CD4-positive, alpha-beta T cell (primary cell): ENCODE measurements at regions of chr7 and their contacts with region 1.

Region 1: DNA sequence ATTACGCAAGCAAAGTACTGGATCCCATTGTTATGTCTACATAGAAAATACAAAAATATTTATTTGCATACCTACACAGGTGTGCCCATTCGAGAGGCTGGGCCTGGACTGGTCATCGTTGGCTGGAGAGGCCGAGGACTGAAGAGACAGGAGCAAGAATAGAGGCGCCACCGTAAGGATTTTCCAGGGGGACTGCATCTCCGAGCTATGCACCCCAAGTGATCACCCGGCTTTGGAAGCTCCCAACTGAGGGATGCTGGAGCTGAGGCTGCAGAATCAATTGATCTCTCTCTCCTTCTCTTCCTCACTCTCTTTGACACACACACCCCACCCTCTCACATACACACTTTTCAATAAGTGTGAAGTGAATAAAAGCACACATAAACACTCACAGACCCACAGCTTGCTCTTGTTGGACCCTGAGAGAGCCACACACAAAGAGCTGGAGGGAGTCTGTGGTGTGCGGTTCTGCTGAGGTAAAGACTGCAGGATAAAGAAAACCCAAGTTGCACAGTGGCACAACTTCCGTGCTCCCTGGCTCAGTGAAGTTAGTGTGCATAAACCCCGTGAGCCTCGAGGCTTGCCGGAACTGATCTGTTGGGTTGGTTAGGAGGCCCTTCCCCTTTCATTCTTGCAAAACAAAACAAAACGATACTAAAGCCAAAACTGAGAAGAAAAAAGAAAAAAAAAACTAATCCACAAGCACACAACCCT is at the start of gene AOAH:
- DNase-seq: peak; percentile 56 to 93 (median 74)
- ATAC-seq: peak; percentile 96
- H3K4me3 ChIP-seq: peak within 1 kb of the TSS; percentile 58
- H3K4me3 Mint-ChIP-seq: peak within 1 kb of the TSS; percentile 78
- H3K27ac ChIP-seq: peak within 1 kb of the TSS; percentile 44 to 51
- H3K27ac Mint-ChIP-seq: peak within 1 kb of the TSS; percentile 94
- H3K4me1 ChIP-seq: peaks cover 59% of the 10 kb centered on the region
- H3K4me1 Mint-ChIP-seq: peaks cover 95% of the 10 kb centered on the region
- H3K27me3 ChIP-seq: no peaks in the 10 kb centered on the region
- H3K27me3 Mint-ChIP-seq: no peaks in the 10 kb centered on the region
- CTCF ChIP-seq: no peak
- total RNA-seq, gene AOAH: 27.5 to 30.3 TPM

Region 2: GRCh38 chr7:36526863-36527548 is 197.1 kb before region 1 on chr7:
- CTCF ChIA-PET with region 1: no interaction called
- POLR2A ChIA-PET with region 1: no interaction called
- intact Hi-C with region 1: no loop called
- DNase-seq: no peak
- ATAC-seq: no peak
- H3K4me3 ChIP-seq: no peak overlapping the region
- H3K4me3 Mint-ChIP-seq: no peak overlapping the region
- H3K27ac ChIP-seq: no peak overlapping the region
- H3K27ac Mint-ChIP-seq: no peak overlapping the region
- H3K4me1 ChIP-seq: no peaks in the 10 kb centered on the region
- H3K4me1 Mint-ChIP-seq: no peaks in the 10 kb centered on the region
- H3K27me3 ChIP-seq: no peaks in the 10 kb centered on the region
- H3K27me3 Mint-ChIP-seq: no peaks in the 10 kb centered on the region
- CTCF ChIP-seq: no peak

Region 3: DNA sequence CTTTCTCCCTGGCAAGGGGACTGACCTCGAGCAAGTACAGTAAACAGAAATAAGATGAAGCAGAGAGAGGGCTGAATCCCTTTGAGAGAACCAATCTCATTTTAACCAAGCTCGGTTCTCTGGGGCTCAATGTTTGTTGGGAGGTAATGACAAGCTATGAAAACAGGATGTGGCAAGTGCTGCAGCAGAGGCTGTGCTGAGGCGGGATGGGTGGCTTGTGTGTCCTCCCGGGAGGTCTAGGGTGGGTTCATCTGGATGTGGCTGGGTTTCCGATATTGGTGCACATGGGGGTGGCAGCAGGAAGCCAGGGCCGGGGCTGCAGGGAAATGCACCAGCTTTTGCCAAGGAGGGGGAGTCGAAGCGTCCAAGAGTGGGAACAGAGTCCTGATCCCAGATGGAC is 84.3 kb before region 1 on chr7:
- CTCF ChIA-PET with region 1: no interaction called
- POLR2A ChIA-PET with region 1: interaction called, 16 read pairs
- intact Hi-C with region 1: no loop called
- DNase-seq: peak; percentile 12 to 89 (median 56)
- ATAC-seq: peak; percentile 92
- H3K4me3 ChIP-seq: no peak overlapping the region
- H3K4me3 Mint-ChIP-seq: peak overlapping the region; percentile 65
- H3K27ac ChIP-seq: peak overlapping the region; percentile 62 to 65
- H3K27ac Mint-ChIP-seq: peak overlapping the region; percentile 91
- H3K4me1 ChIP-seq: peaks cover 47% of the 10 kb centered on the region
- H3K4me1 Mint-ChIP-seq: peaks cover 97% of the 10 kb centered on the region
- H3K27me3 ChIP-seq: no peaks in the 10 kb centered on the region
- H3K27me3 Mint-ChIP-seq: no peaks in the 10 kb centered on the region
- CTCF ChIP-seq: no peak

Region 4: GRCh38 chr7:36686499-36686898 is 37.6 kb before region 1 on chr7:
- CTCF ChIA-PET with region 1: no interaction called
- POLR2A ChIA-PET with region 1: interaction called, 7 read pairs
- intact Hi-C with region 1: loop called in 1 of 2 experiments (anchors 5 kb)
- DNase-seq: peak in 7 of 14 experiments; percentile 12 to 64 (median 31)
- ATAC-seq: peak; percentile 73
- H3K4me3 ChIP-seq: no peak overlapping the region
- H3K4me3 Mint-ChIP-seq: no peak overlapping the region
- H3K27ac ChIP-seq: no peak overlapping the region
- H3K27ac Mint-ChIP-seq: no peak overlapping the region
- H3K4me1 ChIP-seq: peaks cover 7% of the 10 kb centered on the region
- H3K4me1 Mint-ChIP-seq: peaks cover 60% of the 10 kb centered on the region
- H3K27me3 ChIP-seq: no peaks in the 10 kb centered on the region
- H3K27me3 Mint-ChIP-seq: no peaks in the 10 kb centered on the region
- CTCF ChIP-seq: no peak

Region 5: DNA sequence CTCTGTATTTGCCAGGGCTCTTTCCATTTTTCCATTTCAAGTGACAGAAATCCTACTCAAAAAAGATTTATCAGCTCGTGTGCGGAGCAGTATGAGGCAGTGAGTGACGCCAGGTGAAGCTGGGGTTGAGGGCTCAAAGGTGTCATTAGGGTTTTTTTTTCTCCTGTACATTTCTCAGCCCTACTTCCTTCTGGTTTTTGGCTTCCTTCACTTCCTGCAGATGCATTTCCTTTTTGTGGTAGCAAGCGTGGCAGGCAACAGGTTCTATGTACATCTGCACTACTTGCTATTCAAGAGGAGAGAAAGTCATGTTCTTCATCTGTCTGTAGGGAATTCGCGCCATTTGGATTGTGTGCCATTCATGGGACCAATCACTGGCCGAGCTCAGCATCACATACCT is 53.0 kb after region 1 on chr7:
- CTCF ChIA-PET with region 1: no interaction called
- POLR2A ChIA-PET with region 1: interaction called, 59 read pairs
- intact Hi-C with region 1: loop called (anchors 1 to 5 kb)
- DNase-seq: peak; percentile 7 to 87 (median 38)
- ATAC-seq: peak; percentile 69
- H3K4me3 ChIP-seq: peak overlapping the region; percentile 22
- H3K4me3 Mint-ChIP-seq: peak overlapping the region; percentile 78
- H3K27ac ChIP-seq: peak overlapping the region; percentile 7 to 37
- H3K27ac Mint-ChIP-seq: peak overlapping the region; percentile 86
- H3K4me1 ChIP-seq: peaks cover 49% of the 10 kb centered on the region
- H3K4me1 Mint-ChIP-seq: peaks cover 78% of the 10 kb centered on the region
- H3K27me3 ChIP-seq: no peaks in the 10 kb centered on the region
- H3K27me3 Mint-ChIP-seq: no peaks in the 10 kb centered on the region
- CTCF ChIP-seq: no peak

Region 6: GRCh38 chr7:36871863-36872262 is 147.8 kb after region 1 on chr7:
- CTCF ChIA-PET with region 1: no interaction called
- POLR2A ChIA-PET with region 1: no interaction called
- intact Hi-C with region 1: loop called (anchors 5 to 10 kb)
- DNase-seq: peak in 3 of 14 experiments; percentile 25 to 34 (median 29)
- ATAC-seq: peak; percentile 46
- H3K4me3 ChIP-seq: no peak overlapping the region
- H3K4me3 Mint-ChIP-seq: no peak overlapping the region
- H3K27ac ChIP-seq: no peak overlapping the region
- H3K27ac Mint-ChIP-seq: peak overlapping the region; percentile 10
- H3K4me1 ChIP-seq: no peaks in the 10 kb centered on the region
- H3K4me1 Mint-ChIP-seq: peaks cover 9% of the 10 kb centered on the region
- H3K27me3 ChIP-seq: no peaks in the 10 kb centered on the region
- H3K27me3 Mint-ChIP-seq: no peaks in the 10 kb centered on the region
- CTCF ChIP-seq: no peak